Breast epithelium (tissue), 4 donors: ENCODE measurements at regions of chr5 and their contacts with region 1.

Region 1: GRCh38 chr5:34709861-34710673 is 53.9 kb downstream of the RAI14 start:
- DNase-seq: no peak
- H3K4me3 ChIP-seq: no peak overlapping the region
- H3K27ac ChIP-seq: peak overlapping the region in 1 of 2 donors; percentile 1
- H3K4me1 ChIP-seq: no peaks in the 10 kb centered on the region
- H3K27me3 ChIP-seq: no peaks in the 10 kb centered on the region
- CTCF ChIP-seq: no peak
- POLR2A ChIP-seq: no peak

Region 2: DNA sequence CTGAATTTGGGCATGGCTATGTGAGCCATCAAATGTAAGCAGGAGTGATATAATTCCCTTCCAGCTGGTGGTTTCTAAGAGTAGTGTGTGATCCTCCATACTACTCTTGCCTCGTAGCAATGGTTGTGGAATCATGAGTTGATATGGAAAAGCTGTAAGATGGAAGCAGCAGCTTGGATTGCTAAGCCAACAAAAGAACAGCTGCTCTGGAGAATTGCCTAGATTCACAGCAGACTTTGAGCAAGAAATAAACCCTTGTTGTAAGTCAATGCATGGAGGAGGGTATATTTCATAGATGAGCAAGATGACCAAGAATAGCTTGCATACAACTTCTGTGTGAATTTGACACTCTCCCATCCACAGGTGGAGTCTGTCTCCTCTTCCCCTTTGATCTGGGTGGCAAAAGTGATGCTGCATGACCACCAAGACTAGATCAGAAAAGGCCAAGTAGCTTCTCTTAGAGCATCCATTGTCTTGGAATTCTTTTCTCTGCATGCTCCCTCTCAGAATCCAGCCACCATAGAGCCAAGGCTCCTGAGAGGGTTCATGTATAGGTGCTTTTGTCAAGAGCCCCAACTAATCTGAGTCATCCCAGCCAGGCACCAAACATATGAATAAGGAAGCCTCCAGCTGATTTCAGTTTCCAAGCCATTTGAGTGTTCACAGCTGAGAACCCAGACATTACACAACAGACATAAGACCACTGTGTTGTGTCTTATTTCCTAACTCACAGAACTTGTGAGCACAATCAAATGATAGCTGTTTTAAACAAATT is 441.3 kb after region 1 on chr5:
- intact Hi-C with region 1: loop called (anchors 10 kb)
- DNase-seq: no peak
- H3K4me3 ChIP-seq: no peak overlapping the region
- H3K27ac ChIP-seq: no peak overlapping the region
- H3K4me1 ChIP-seq: no peaks in the 10 kb centered on the region
- H3K27me3 ChIP-seq: no peaks in the 10 kb centered on the region
- CTCF ChIP-seq: no peak
- POLR2A ChIP-seq: no peak